ENCODE measurements at regions of chr14 and their contacts with region 1.

Region 1: GRCh38 chr14:50619556-50620141 is 48.5 kb downstream of the SAV1 start:
- DNase-seq: peak; percentile 53
- H3K4me3 ChIP-seq: no peak overlapping the region
- H3K27ac ChIP-seq: no peak overlapping the region
- H3K4me1 ChIP-seq: no peaks in the 10 kb centered on the region
- CTCF ChIP-seq: peak; percentile 84

Region 2: DNA sequence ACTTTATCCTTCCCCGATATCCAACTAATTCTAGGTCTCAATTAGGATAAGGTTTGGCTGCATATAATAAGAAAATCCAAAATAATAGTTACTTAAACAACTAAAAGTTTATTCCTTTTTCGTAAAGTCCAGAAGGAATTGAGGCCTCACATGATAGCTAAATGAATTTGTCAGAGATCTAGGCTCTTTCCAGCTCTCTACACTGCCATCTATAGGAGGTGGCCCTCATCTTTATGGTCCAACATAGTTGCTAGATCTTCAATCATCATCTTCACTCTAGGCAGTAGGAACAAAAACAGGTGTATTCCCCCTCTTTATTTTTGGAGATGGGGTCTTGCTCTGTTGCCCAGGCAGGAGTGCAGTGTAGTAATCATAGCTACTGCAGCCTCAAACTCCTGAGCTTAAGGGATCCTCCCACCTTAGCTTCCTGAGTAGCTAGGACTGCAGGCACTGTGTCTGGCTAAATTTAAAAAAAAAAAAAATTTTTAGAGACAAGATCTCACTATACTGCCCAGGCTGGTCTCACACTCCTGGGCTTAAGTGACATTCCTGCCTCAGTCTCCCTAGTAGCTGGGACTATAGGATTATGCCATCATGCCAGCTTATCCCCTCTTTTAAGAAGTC is 94.9 kb after region 1 on chr14:
- CTCF ChIA-PET with region 1: no interaction called
- POLR2A ChIA-PET with region 1: no interaction called
- intact Hi-C with region 1: loop called (anchors 2 kb)
- DNase-seq: peak; percentile 52
- H3K4me3 ChIP-seq: no peak overlapping the region
- H3K27ac ChIP-seq: no peak overlapping the region
- H3K4me1 ChIP-seq: no peaks in the 10 kb centered on the region
- CTCF ChIP-seq: peak; percentile 84

Region 3: GRCh38 chr14:50762001-50762930 is 142.6 kb after region 1 on chr14:
- CTCF ChIA-PET with region 1: no interaction called
- POLR2A ChIA-PET with region 1: no interaction called
- intact Hi-C with region 1: no loop called
- DNase-seq: no peak
- H3K4me3 ChIP-seq: no peak overlapping the region
- H3K27ac ChIP-seq: no peak overlapping the region
- H3K4me1 ChIP-seq: no peaks in the 10 kb centered on the region
- CTCF ChIP-seq: no peak

Region 4: GRCh38 chr14:50773632-50774541 is 154.2 kb after region 1 on chr14:
- CTCF ChIA-PET with region 1: interaction called, 4 read pairs
- POLR2A ChIA-PET with region 1: interaction called, 3 read pairs
- intact Hi-C with region 1: loop called (anchors 5 kb)
- DNase-seq: peak; percentile 30
- H3K4me3 ChIP-seq: no peak overlapping the region
- H3K27ac ChIP-seq: no peak overlapping the region
- H3K4me1 ChIP-seq: peaks cover 14% of the 10 kb centered on the region
- CTCF ChIP-seq: peak; percentile 82

Region 5: GRCh38 chr14:51041108-51041531 is 421.5 kb after region 1 on chr14:
- CTCF ChIA-PET with region 1: no interaction called
- POLR2A ChIA-PET with region 1: no interaction called
- intact Hi-C with region 1: no loop called
- DNase-seq: no peak
- H3K4me3 ChIP-seq: no peak overlapping the region
- H3K27ac ChIP-seq: no peak overlapping the region
- H3K4me1 ChIP-seq: no peaks in the 10 kb centered on the region
- CTCF ChIP-seq: no peak

Region 6: DNA sequence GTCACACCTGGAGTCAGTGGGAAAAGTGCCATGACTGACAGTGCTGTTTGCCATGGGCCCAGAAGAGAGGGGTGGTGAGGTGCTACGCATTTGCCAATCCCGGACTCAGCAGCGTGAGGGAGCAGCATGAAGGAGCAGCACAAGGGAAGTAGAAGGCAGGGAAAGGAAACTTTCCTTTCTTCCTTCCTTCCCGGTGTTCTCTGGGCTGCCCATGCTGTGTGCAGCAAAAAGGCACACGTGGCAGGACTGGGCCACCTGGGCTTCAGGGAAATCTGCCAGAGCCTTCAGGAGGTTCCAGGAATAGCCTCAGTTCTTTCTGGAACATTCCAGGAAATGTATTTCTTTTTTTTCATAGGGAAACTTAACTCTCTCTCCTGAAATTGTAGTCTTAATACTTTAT is 452.2 kb after region 1 on chr14:
- CTCF ChIA-PET with region 1: no interaction called
- POLR2A ChIA-PET with region 1: no interaction called
- intact Hi-C with region 1: no loop called
- DNase-seq: no peak
- H3K4me3 ChIP-seq: no peak overlapping the region
- H3K27ac ChIP-seq: no peak overlapping the region
- H3K4me1 ChIP-seq: no peaks in the 10 kb centered on the region
- CTCF ChIP-seq: no peak

Region 7: DNA sequence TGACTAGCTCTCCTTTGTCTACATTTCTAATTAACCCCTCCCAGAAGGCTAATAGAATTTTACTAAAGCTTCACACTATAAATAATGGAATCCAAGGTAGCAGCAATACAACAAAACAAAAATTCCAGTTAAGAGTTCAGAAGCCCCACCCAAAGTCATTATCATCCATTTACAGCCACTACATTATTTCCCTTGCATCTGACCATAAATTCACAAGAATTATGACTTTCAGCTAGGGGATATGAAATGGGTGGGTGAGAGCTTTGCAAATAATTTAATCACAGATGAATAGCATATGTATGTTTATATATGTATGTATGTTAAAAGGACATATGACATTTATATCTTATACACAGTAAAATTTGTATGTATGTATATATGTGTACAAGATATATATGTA is 1582.5 kb after region 1 on chr14:
- CTCF ChIA-PET with region 1: no interaction called
- POLR2A ChIA-PET with region 1: no interaction called
- intact Hi-C with region 1: no loop called
- DNase-seq: no peak
- H3K4me3 ChIP-seq: no peak overlapping the region
- H3K27ac ChIP-seq: no peak overlapping the region
- H3K4me1 ChIP-seq: no peaks in the 10 kb centered on the region
- CTCF ChIP-seq: no peak